Activated naive CD4-positive, alpha-beta T cell treated with anti-CD3 and anti-CD28 coated beads for 36 hours (primary cell): ENCODE measurements at regions of chr3 and their contacts with region 1.

Region 1: DNA sequence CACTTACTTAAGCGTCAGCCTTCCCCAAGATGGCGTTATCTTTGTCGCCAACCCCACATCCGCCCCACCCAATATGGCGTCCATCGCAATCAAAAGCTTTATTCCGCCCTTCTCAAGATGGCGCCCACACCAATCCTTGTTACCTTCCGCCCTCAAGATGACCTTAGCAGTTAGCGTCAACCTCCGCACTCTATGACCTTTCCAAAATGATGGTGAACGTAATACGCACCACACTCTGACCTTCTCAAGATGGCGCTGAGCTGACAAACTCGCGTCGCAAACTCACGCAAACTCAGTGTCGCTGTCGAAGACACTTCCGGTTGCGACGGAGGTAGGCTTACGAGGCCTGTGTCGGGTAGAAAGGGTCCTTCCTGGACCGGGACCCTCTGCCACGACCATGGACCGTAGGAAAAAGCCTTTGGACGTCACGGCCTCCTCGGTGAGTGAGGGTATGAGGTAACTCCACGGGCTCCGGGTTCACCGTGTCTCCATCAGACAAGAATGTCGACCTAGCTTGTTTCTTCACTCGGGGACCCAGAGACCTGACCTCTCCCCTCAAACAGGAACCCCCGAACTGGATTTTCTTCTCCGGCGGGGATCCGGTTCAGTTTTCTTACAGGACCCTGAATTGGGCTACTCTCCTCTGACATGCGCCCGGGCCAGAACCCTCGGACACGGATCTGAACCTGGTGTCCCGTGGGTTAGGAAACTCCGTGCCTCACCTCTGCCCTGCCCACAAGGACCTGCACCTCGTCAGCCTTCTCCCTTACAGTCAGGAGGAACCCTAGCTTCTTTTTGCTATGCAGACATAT is at the start of gene CCDC174:
- DNase-seq: peak; percentile 97
- H3K4me3 Mint-ChIP-seq: peak within 1 kb of the TSS; percentile 99
- H3K27ac Mint-ChIP-seq: peak within 1 kb of the TSS; percentile 98
- H3K4me1 Mint-ChIP-seq: peaks cover 38% of the 10 kb centered on the region
- H3K27me3 Mint-ChIP-seq: no peaks in the 10 kb centered on the region
- total RNA-seq, gene CCDC174: 16.1 to 20.7 TPM

Region 2: GRCh38 chr3:13012228-13012691 is 1639.4 kb before region 1 on chr3:
- CTCF ChIA-PET with region 1: no interaction called
- intact Hi-C with region 1: loop called (anchors 5 kb)
- DNase-seq: peak; percentile 88
- H3K4me3 Mint-ChIP-seq: peak overlapping the region; percentile 65
- H3K27ac Mint-ChIP-seq: peak overlapping the region; percentile 97
- H3K4me1 Mint-ChIP-seq: peaks cover 80% of the 10 kb centered on the region
- H3K27me3 Mint-ChIP-seq: no peaks in the 10 kb centered on the region

Region 3: DNA sequence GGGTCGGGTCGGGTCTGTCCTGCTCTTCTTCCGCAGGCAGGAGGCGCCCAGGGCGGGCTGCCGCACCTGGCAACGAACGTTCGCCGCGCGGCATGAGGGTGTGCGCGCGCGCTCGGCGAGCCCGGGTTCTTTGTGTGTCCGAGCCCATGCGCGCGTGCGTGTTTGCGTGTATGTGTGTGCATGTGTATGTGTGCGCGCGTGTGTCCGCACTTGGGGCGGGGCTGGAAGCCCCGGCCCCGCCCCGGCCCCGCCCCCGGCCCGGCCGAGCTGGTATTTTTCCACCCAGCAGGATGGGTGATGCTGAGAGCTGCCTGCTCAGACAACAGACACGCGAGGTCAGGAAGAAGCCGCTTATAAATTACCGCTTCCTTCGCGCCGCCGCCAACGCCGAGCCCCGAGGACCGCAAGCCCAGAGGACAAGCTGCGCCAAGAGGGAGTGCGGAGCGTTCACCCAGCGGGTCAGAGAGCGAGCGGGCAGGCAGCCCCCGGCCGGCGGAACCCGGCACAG is 249.3 kb before region 1 on chr3 and contains the start of gene SLC6A6:
- CTCF ChIA-PET with region 1: no interaction called
- intact Hi-C with region 1: loop called (anchors 2 kb)
- DNase-seq: peak; percentile 91
- H3K4me3 Mint-ChIP-seq: peak within 1 kb of the TSS; percentile 96
- H3K27ac Mint-ChIP-seq: peak within 1 kb of the TSS; percentile 91
- H3K4me1 Mint-ChIP-seq: peaks cover 32% of the 10 kb centered on the region
- H3K27me3 Mint-ChIP-seq: no peaks in the 10 kb centered on the region
- total RNA-seq, gene SLC6A6: 32.2 to 36.9 TPM

Region 4: GRCh38 chr3:14598143-14598569 is 53.5 kb before region 1 on chr3:
- CTCF ChIA-PET with region 1: no interaction called
- intact Hi-C with region 1: loop called (anchors 1 kb)
- DNase-seq: peak; percentile 81
- H3K4me3 Mint-ChIP-seq: no peak overlapping the region
- H3K27ac Mint-ChIP-seq: no peak overlapping the region
- H3K4me1 Mint-ChIP-seq: peaks cover 3% of the 10 kb centered on the region
- H3K27me3 Mint-ChIP-seq: peaks cover 44% of the 10 kb centered on the region

Region 5: GRCh38 chr3:15098503-15099363 is 447.1 kb after region 1 on chr3 and contains the start of gene RBSN:
- CTCF ChIA-PET with region 1: no interaction called
- intact Hi-C with region 1: loop called (anchors 1 kb)
- DNase-seq: peak; percentile 97
- H3K4me3 Mint-ChIP-seq: peak within 1 kb of the TSS; percentile 90
- H3K27ac Mint-ChIP-seq: peak within 1 kb of the TSS; percentile 83
- H3K4me1 Mint-ChIP-seq: peaks cover 10% of the 10 kb centered on the region
- H3K27me3 Mint-ChIP-seq: no peaks in the 10 kb centered on the region
- total RNA-seq, gene RBSN: 15.3 to 15.8 TPM

Region 6: DNA sequence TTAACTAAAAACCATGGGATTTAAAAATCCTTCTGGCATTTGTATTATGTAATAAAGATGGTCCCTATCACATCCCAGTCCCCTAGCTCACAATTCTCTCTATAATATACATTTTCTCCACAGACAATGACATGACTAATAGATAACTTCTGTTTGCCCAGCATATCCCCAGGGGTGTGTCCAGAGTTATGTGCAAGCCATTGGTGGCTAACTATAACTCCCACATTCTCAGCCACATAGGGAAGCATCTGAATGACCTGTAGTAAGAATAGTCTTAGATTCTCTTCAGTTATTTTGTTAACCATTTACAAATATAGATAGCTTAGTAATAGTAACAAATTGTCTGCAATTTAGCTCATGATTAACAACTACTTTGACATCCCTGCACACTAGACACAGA is 499.5 kb after region 1 on chr3:
- CTCF ChIA-PET with region 1: no interaction called
- intact Hi-C with region 1: no loop called
- DNase-seq: no peak
- H3K4me3 Mint-ChIP-seq: no peak overlapping the region
- H3K27ac Mint-ChIP-seq: no peak overlapping the region
- H3K4me1 Mint-ChIP-seq: no peaks in the 10 kb centered on the region
- H3K27me3 Mint-ChIP-seq: peaks cover 19% of the 10 kb centered on the region